OCI-LY7 (cell line): ENCODE measurements at regions of chr2 and their contacts with region 1.

Region 1: GRCh38 chr2:86068136-86068588 is 37.5 kb downstream of the POLR1A start:
- DNase-seq: peak; percentile 51
- H3K4me3 ChIP-seq: no peak overlapping the region
- H3K27ac ChIP-seq: no peak overlapping the region
- H3K4me1 ChIP-seq: peaks cover 13% of the 10 kb centered on the region
- CTCF ChIP-seq: no peak

Region 2: GRCh38 chr2:85888684-85889626 is 179.2 kb before region 1 on chr2 and contains the start of gene ST3GAL5:
- CTCF ChIA-PET with region 1: no interaction called
- POLR2A ChIA-PET with region 1: no interaction called
- intact Hi-C with region 1: loop called (anchors 10 kb)
- DNase-seq: peak; percentile 93
- H3K4me3 ChIP-seq: peak within 1 kb of the TSS; percentile 87
- H3K27ac ChIP-seq: peak within 1 kb of the TSS; percentile 14
- H3K4me1 ChIP-seq: peaks cover 22% of the 10 kb centered on the region
- CTCF ChIP-seq: peak; percentile 92
- total RNA-seq, gene ST3GAL5: 6.1 and 7.4 TPM in 2 replicates

Region 3: GRCh38 chr2:85954590-85955458 is 113.3 kb before region 1 on chr2:
- CTCF ChIA-PET with region 1: no interaction called
- POLR2A ChIA-PET with region 1: no interaction called
- intact Hi-C with region 1: loop called (anchors 10 kb)
- DNase-seq: no peak
- H3K4me3 ChIP-seq: no peak overlapping the region
- H3K27ac ChIP-seq: no peak overlapping the region
- H3K4me1 ChIP-seq: no peaks in the 10 kb centered on the region
- CTCF ChIP-seq: no peak